ENCODE measurements at regions of chr3 and their contacts with region 1.

Region 1: GRCh38 chr3:129160891-129161859 is at the start of gene ISY1:
- DNase-seq: peak; percentile 96
- H3K4me3 Mint-ChIP-seq: peak within 1 kb of the TSS; percentile 90
- H3K27ac Mint-ChIP-seq: peak within 1 kb of the TSS; percentile 99
- H3K4me1 Mint-ChIP-seq: peaks cover 35% of the 10 kb centered on the region
- H3K27me3 Mint-ChIP-seq: no peaks in the 10 kb centered on the region
- CTCF ChIP-seq: peak; percentile 86
- total RNA-seq, gene ISY1: 63.8 and 77.0 TPM in 2 replicates

Region 2: GRCh38 chr3:128021759-128022372 is 1139.3 kb before region 1 on chr3:
- CTCF ChIA-PET with region 1: no interaction called
- intact Hi-C with region 1: no loop called
- DNase-seq: no peak
- H3K4me3 Mint-ChIP-seq: no peak overlapping the region
- H3K27ac Mint-ChIP-seq: no peak overlapping the region
- H3K4me1 Mint-ChIP-seq: no peaks in the 10 kb centered on the region
- H3K27me3 Mint-ChIP-seq: peaks cover 48% of the 10 kb centered on the region
- CTCF ChIP-seq: no peak

Region 3: DNA sequence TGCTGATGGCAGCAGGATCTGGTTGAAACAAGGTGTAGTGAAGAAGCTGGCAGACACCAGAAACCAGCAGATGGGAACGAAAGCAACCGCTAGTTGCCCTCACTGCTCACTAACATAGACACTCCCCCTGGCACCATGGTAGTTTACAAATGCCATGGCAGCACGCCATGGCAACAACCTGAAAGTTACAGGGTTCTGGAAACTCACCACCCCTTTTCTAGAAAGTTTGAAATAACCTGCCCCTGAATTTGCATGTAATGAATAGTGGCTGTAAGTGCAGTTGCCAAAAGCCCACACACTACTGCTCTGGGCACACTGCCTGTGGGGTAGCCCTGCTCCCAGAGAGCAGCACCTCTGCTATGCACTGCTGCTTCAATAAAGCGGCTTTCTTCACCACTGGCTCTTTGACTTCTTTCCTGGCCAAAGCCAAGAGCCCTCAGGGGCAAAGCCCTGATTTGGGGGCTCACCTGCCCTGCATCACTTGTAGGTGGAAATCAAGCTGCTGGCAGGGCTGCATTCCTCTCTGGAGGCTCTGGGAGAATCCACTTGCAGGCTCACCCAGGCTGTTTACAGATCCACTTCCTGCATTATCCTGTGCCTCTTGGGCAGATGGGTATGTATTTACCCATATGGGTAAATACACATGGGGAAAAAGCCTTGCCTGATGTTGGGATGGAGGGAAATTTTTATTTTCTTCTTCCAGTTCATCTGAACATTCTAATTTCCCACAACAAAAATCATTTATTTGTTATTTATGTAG is 102.6 kb before region 1 on chr3:
- CTCF ChIA-PET with region 1: interaction called, 16 read pairs
- intact Hi-C with region 1: loop called (anchors 2 kb)
- DNase-seq: peak; percentile 38
- H3K4me3 Mint-ChIP-seq: no peak overlapping the region
- H3K27ac Mint-ChIP-seq: no peak overlapping the region
- H3K4me1 Mint-ChIP-seq: peaks cover 26% of the 10 kb centered on the region
- H3K27me3 Mint-ChIP-seq: peaks cover 36% of the 10 kb centered on the region
- CTCF ChIP-seq: no peak

Measured in Calu3 (cell line).